ENCODE measurements at regions of chr6 and their contacts with region 1.

Region 1: GRCh38 chr6:136792410-136793262 is at the start of gene MAP3K5:
- DNase-seq: peak; percentile 96 to 97 (median 97)
- ATAC-seq: peak; percentile 92
- H3K4me3 ChIP-seq: peak within 1 kb of the TSS; percentile 77
- H3K4me1 ChIP-seq: peaks cover 13% of the 10 kb centered on the region
- CTCF ChIP-seq: peak; percentile 81
- total RNA-seq, gene MAP3K5: 12.6 to 18.2 (median 16.3) TPM

Region 2: GRCh38 chr6:136137008-136137692 is 655.5 kb before region 1 on chr6:
- intact Hi-C with region 1: no loop called
- DNase-seq: no peak
- ATAC-seq: no peak
- H3K4me3 ChIP-seq: no peak overlapping the region
- H3K4me1 ChIP-seq: peaks cover 4% of the 10 kb centered on the region
- CTCF ChIP-seq: no peak

Region 3: GRCh38 chr6:136582711-136583471 is 209.7 kb before region 1 on chr6:
- intact Hi-C with region 1: loop called in 1 of 2 experiments (anchors 5 kb)
- DNase-seq: no peak
- ATAC-seq: peak; percentile 65
- H3K4me3 ChIP-seq: no peak overlapping the region
- H3K4me1 ChIP-seq: no peaks in the 10 kb centered on the region
- CTCF ChIP-seq: peak; percentile 17

Region 4: DNA sequence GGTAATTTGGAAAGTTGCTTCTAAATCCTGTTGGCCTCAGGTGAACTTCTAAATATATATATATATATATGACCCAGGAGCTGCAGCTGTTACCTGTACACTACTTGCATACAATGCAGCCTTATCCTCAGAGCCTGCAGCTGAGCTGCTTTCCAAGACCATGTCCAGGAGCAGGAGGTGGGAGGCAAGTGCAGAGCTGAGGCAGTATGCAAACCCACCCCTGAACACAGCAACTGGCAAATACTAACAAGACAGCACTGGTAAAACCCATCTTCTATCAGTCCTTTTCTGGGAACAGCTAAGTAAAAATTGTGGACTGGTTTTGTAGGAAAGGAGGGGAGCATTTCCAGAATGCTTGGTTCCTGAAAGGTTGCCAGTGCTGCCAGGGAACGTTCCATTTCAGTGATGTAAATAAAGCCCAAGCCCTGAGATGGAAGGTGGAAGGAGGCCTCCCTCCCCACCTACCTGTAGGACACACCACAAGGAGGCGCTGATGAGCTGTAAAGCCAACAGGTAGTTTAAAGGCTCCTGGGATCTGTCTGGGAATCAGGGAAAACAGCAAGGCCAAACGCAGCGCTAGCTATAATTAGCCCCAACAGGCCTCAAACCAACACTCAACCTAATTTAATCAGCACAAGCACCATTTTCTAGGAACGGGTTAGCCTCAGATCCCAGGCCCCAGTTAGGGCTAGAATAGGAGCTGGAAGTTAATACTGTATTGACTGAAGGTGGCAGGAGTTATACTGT is 148.6 kb before region 1 on chr6:
- intact Hi-C with region 1: loop called (anchors 2 to 5 kb)
- DNase-seq: peak; percentile 72 to 99 (median 89)
- ATAC-seq: peak; percentile 98
- H3K4me3 ChIP-seq: no peak overlapping the region
- H3K4me1 ChIP-seq: no peaks in the 10 kb centered on the region
- CTCF ChIP-seq: peak; percentile 64

Measured in mucosa of descending colon (tissue), 3 donors.